Activated CD4-positive, alpha-beta T cell treated with anti-CD3 and anti-CD28 coated beads for 36 hours (primary cell): ENCODE measurements at regions of chr5 and their contacts with region 1.

Region 1: GRCh38 chr5:147857302-147858129 is 21.0 kb upstream of the SCGB3A2 start:
- DNase-seq: peak; percentile 68
- ATAC-seq: peak; percentile 71
- H3K4me3 Mint-ChIP-seq: no peak overlapping the region
- H3K27ac Mint-ChIP-seq: no peak overlapping the region
- H3K4me1 Mint-ChIP-seq: no peaks in the 10 kb centered on the region
- H3K27me3 Mint-ChIP-seq: peaks cover 9% of the 10 kb centered on the region

Region 2: GRCh38 chr5:147586832-147587231 is 270.7 kb before region 1 on chr5:
- CTCF ChIA-PET with region 1: no interaction called
- POLR2A ChIA-PET with region 1: no interaction called
- intact Hi-C with region 1: no loop called
- DNase-seq: no peak
- ATAC-seq: no peak
- H3K4me3 Mint-ChIP-seq: no peak overlapping the region
- H3K27ac Mint-ChIP-seq: no peak overlapping the region
- H3K4me1 Mint-ChIP-seq: no peaks in the 10 kb centered on the region
- H3K27me3 Mint-ChIP-seq: no peaks in the 10 kb centered on the region

Region 3: GRCh38 chr5:147874910-147875367 is 17.4 kb after region 1 on chr5:
- CTCF ChIA-PET with region 1: no interaction called
- POLR2A ChIA-PET with region 1: no interaction called
- intact Hi-C with region 1: no loop called
- DNase-seq: no peak
- ATAC-seq: no peak
- H3K4me3 Mint-ChIP-seq: no peak overlapping the region
- H3K27ac Mint-ChIP-seq: no peak overlapping the region
- H3K4me1 Mint-ChIP-seq: no peaks in the 10 kb centered on the region
- H3K27me3 Mint-ChIP-seq: peaks cover 3% of the 10 kb centered on the region

Region 4: DNA sequence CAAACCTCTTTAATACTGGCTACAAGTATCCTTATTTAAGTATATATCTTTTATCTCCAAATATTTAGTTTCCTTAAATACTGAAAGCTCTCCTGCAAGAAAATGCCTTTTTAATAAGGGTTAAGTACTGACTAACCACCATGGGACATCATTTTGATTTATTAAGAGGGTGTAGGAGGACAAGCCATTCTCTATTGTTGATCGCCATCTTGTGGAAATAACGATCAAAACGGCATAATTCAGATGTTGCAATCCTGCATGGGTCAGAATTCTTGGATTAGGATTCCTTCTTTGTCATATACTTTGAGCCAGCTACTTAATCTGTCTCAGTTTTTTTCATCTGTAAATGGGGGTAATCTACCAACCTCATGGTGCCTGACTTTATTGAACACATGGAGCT is 77.5 kb after region 1 on chr5:
- CTCF ChIA-PET with region 1: interaction called, 4 read pairs
- POLR2A ChIA-PET with region 1: no interaction called
- intact Hi-C with region 1: loop called in 1 of 2 experiments (anchors 5 kb)
- DNase-seq: no peak
- ATAC-seq: no peak
- H3K4me3 Mint-ChIP-seq: no peak overlapping the region
- H3K27ac Mint-ChIP-seq: no peak overlapping the region
- H3K4me1 Mint-ChIP-seq: no peaks in the 10 kb centered on the region
- H3K27me3 Mint-ChIP-seq: peaks cover 7% of the 10 kb centered on the region

Region 5: GRCh38 chr5:148005788-148006520 is 148.4 kb after region 1 on chr5:
- CTCF ChIA-PET with region 1: no interaction called
- POLR2A ChIA-PET with region 1: no interaction called
- intact Hi-C with region 1: loop called in 1 of 2 experiments (anchors 1 kb)
- DNase-seq: peak; percentile 14
- ATAC-seq: no peak
- H3K4me3 Mint-ChIP-seq: no peak overlapping the region
- H3K27ac Mint-ChIP-seq: no peak overlapping the region
- H3K4me1 Mint-ChIP-seq: no peaks in the 10 kb centered on the region
- H3K27me3 Mint-ChIP-seq: no peaks in the 10 kb centered on the region

Region 6: GRCh38 chr5:148897842-148898241 is 1040.3 kb after region 1 on chr5:
- CTCF ChIA-PET with region 1: no interaction called
- POLR2A ChIA-PET with region 1: no interaction called
- intact Hi-C with region 1: no loop called
- DNase-seq: no peak
- ATAC-seq: no peak
- H3K4me3 Mint-ChIP-seq: no peak overlapping the region
- H3K27ac Mint-ChIP-seq: no peak overlapping the region
- H3K4me1 Mint-ChIP-seq: no peaks in the 10 kb centered on the region
- H3K27me3 Mint-ChIP-seq: peaks cover 28% of the 10 kb centered on the region

Region 7: GRCh38 chr5:148957591-148958202 is 1100.2 kb after region 1 on chr5:
- CTCF ChIA-PET with region 1: no interaction called
- POLR2A ChIA-PET with region 1: no interaction called
- intact Hi-C with region 1: no loop called
- DNase-seq: peak; percentile 68
- ATAC-seq: peak; percentile 57
- H3K4me3 Mint-ChIP-seq: no peak overlapping the region
- H3K27ac Mint-ChIP-seq: no peak overlapping the region
- H3K4me1 Mint-ChIP-seq: no peaks in the 10 kb centered on the region
- H3K27me3 Mint-ChIP-seq: no peaks in the 10 kb centered on the region